IMR-90 (cell line): ENCODE measurements at regions of chr4 and their contacts with region 1.

Region 1: GRCh38 chr4:94870146-94870545 is 112.4 kb downstream of the BMPR1B start:
- DNase-seq: no peak
- ATAC-seq: 0 out of 2 replicates have a peak, but pooled peaks have one; percentile 18
- H3K4me3 ChIP-seq: no peak overlapping the region
- H3K27ac ChIP-seq: no peak overlapping the region
- H3K4me1 ChIP-seq: peaks cover 4% of the 10 kb centered on the region
- H3K27me3 ChIP-seq: no peaks in the 10 kb centered on the region
- CTCF ChIP-seq: no peak
- POLR2A ChIP-seq: no peak
- RAD21 ChIP-seq: no peak

Region 2: DNA sequence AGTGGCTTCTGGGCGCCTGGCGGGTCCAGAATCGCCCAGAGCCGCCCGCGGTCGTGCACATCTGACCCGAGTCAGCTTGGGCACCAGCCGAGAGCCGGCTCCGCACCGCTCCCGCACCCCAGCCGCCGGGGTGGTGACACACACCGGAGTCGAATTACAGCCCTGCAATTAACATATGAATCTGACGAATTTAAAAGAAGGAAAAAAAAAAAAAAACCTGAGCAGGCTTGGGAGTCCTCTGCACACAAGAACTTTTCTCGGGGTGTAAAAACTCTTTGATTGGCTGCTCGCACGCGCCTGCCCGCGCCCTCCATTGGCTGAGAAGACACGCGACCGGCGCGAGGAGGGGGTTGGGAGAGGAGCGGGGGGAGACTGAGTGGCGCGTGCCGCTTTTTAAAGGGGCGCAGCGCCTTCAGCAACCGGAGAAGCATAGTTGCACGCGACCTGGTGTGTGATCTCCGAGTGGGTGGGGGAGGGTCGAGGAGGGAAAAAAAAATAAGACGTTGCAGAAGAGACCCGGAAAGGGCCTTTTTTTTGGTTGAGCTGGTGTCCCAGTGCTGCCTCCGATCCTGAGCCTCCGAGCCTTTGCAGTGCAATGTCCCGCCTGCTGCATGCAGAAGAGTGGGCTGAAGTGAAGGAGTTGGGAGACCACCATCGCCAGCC is 1041.7 kb before region 1 on chr4 and contains the start of gene ATOH1:
- CTCF ChIA-PET with region 1: no interaction called
- POLR2A ChIA-PET with region 1: no interaction called
- dilution Hi-C with region 1: no loop called
- in situ Hi-C with region 1: no loop called
- intact Hi-C with region 1: no loop called
- DNase-seq: no peak
- ATAC-seq: peak; percentile 72
- H3K4me3 ChIP-seq: peak within 1 kb of the TSS; percentile 17; the same call in 1 of the 2 replicates
- H3K27ac ChIP-seq: no peak within 1 kb of the TSS
- H3K4me1 ChIP-seq: no peaks in the 10 kb centered on the region
- H3K27me3 ChIP-seq: peaks cover 62% of the 10 kb centered on the region
- CTCF ChIP-seq: no peak
- POLR2A ChIP-seq: no peak
- RAD21 ChIP-seq: no peak
- total RNA-seq, gene ATOH1: not detected in 2 replicates

Region 3: GRCh38 chr4:94256828-94257227 is 613.3 kb before region 1 on chr4:
- CTCF ChIA-PET with region 1: no interaction called
- POLR2A ChIA-PET with region 1: no interaction called
- dilution Hi-C with region 1: no loop called
- in situ Hi-C with region 1: no loop called
- intact Hi-C with region 1: no loop called
- DNase-seq: peak; percentile 7
- ATAC-seq: 0 out of 2 replicates have a peak, but pooled peaks have one; percentile 53
- H3K4me3 ChIP-seq: no peak overlapping the region
- H3K27ac ChIP-seq: no peak overlapping the region
- H3K4me1 ChIP-seq: no peaks in the 10 kb centered on the region
- H3K27me3 ChIP-seq: no peaks in the 10 kb centered on the region
- CTCF ChIP-seq: peak; percentile 28
- POLR2A ChIP-seq: no peak
- RAD21 ChIP-seq: peak; percentile 36

Region 4: GRCh38 chr4:94889946-94890345 is 19.8 kb after region 1 on chr4:
- CTCF ChIA-PET with region 1: interaction called, 10 read pairs
- POLR2A ChIA-PET with region 1: no interaction called
- dilution Hi-C with region 1: no loop called
- in situ Hi-C with region 1: no loop called
- intact Hi-C with region 1: no loop called
- DNase-seq: peak; percentile 73
- ATAC-seq: peak; percentile 63
- H3K4me3 ChIP-seq: no peak overlapping the region
- H3K27ac ChIP-seq: no peak overlapping the region; the same call in 1 of the 2 replicates
- H3K4me1 ChIP-seq: peaks cover 2% of the 10 kb centered on the region
- H3K27me3 ChIP-seq: no peaks in the 10 kb centered on the region
- CTCF ChIP-seq: no peak
- POLR2A ChIP-seq: no peak
- RAD21 ChIP-seq: no peak